ENCODE measurements at regions of chr15 and their contacts with region 1.

Region 1: DNA sequence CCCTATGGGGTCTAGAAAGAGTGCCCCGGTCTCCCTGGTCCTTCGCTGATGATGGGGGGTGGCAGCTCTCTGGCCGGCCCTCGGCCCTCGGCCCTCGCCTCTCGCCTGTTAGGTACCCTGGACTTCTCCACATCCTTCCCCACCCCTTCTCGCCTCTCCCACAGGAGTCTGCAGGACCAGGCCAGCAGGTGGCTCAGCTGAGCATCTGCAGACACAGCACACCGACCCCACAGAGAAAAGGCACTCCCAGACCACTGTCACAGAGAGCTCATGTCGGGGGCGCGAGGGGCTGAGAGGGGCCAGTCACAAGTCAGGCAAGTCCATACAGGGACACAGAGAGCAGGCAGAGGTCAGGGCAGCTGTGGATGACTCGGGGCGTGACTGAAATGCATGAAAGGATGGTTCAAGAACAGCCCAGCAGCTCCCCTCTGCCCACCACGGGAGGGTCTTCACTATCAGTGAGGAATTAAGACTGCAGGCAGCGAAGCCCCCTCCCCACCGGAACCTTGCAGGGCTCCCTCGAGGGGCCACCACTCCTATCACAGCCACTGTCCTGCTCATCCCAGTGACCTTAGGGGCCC is 181.7 kb upstream of the NSMCE3 start:
- DNase-seq: no peak
- H3K4me3 ChIP-seq: no peak overlapping the region
- H3K27ac ChIP-seq: no peak overlapping the region
- H3K4me1 ChIP-seq: no peaks in the 10 kb centered on the region
- H3K27me3 ChIP-seq: no peaks in the 10 kb centered on the region
- CTCF ChIP-seq: no peak

Region 2: GRCh38 chr15:29403772-29404171 is 47.5 kb before region 1 on chr15:
- intact Hi-C with region 1: no loop called
- DNase-seq: no peak
- H3K4me3 ChIP-seq: no peak overlapping the region
- H3K27ac ChIP-seq: no peak overlapping the region
- H3K4me1 ChIP-seq: no peaks in the 10 kb centered on the region
- H3K27me3 ChIP-seq: no peaks in the 10 kb centered on the region
- CTCF ChIP-seq: no peak

Region 3: DNA sequence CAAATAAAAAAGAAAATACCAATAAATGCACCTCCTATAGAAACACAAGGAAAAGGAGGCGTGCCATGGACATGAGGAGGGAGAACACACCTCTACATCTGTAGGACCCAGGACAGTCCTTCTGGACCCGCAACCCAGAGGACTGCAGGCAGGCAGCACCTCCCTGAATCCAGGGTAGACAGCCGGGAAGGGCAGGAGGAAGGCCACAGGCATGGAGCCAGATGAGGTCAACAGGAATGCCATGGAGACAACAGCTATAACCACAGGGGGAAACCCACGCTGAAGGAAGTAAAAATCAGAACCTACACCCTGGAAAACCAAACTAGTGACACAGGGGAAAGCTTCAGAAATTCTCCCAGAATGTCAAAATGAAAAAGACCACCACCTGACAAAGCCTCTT is 67.2 kb after region 1 on chr15:
- intact Hi-C with region 1: loop called (anchors 5 kb)
- DNase-seq: no peak
- H3K4me3 ChIP-seq: no peak overlapping the region
- H3K27ac ChIP-seq: no peak overlapping the region
- H3K4me1 ChIP-seq: no peaks in the 10 kb centered on the region
- H3K27me3 ChIP-seq: no peaks in the 10 kb centered on the region
- CTCF ChIP-seq: no peak

Region 4: DNA sequence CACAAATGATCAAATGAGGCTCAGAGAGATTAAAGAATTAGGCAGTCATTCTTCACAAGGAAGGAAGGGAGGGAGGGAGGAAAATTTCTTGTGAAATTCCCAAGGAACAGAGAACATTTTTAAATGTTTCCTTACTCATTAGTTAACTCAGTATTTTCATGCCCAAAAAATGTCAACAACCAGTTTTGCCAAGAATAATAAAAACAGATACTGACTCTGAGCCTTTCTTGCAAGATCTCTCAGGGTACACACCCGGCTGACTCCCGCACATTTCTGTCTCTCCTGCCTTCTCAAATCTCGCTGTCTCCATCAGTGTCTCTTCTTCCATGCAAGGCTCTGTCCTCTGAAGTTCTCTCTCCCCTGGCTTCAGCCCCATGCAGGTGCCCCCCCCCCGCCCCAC is 105.1 kb after region 1 on chr15:
- intact Hi-C with region 1: loop called (anchors 10 kb)
- DNase-seq: no peak
- H3K4me3 ChIP-seq: no peak overlapping the region
- H3K27ac ChIP-seq: no peak overlapping the region
- H3K4me1 ChIP-seq: no peaks in the 10 kb centered on the region
- H3K27me3 ChIP-seq: no peaks in the 10 kb centered on the region
- CTCF ChIP-seq: no peak

Region 5: DNA sequence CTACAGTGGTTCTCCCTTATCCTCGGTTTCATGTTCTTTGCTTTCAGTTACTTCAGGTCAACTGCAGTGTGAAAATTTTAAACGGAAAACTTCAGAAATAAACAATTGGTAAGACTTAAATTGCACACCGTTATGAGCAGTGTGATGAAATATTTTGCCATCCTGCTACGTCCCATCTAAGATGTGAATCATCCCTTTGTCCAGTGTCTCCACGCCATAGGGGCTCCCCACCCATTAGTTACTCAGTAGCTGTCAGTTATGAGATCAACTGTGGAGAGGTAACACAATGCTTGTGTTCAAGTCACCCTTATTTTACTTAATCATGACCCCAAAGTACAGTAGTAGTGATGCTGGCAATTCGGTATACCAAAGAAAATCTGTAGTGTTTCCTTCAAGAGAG is 323.6 kb after region 1 on chr15:
- intact Hi-C with region 1: no loop called
- DNase-seq: no peak
- H3K4me3 ChIP-seq: no peak overlapping the region
- H3K27ac ChIP-seq: no peak overlapping the region
- H3K4me1 ChIP-seq: peaks cover 0 to 3% of the 10 kb centered on the region in 2 donors
- H3K27me3 ChIP-seq: no peaks in the 10 kb centered on the region
- CTCF ChIP-seq: no peak